ENCODE measurements at regions of chr16 and their contacts with region 1.

Region 1: DNA sequence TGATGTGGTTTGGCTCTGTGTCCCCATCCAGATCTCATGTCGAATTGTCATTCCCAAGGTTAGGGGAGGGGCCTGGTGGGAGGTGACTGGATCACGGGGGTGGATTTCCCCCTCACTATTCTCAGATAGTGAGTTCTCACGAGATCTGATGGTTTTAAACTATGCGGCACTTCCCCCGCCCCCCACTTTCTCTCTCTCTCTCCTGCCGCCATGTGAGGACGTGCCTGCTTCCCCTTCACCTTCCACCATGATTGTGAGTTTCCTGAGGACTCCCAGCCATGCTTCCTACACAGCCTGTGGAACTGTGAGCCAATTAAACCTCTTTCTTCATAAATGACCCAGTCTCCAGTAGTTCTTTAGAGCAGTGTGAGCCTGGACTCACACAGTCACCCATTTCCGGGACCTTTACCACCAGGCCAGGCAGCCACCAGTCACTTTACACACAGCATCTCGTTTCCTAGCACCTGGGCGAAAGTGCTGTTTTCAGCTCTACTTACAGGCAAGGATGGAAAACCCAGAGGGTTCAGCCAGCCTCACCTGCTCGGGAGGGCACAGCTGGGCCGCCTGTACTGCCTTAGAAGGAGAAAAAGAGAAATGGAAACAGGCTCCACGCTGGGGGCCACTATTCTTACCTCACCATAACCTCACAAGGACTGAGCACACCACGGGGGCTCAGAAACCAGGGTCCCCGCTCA is 13.8 kb upstream of the ZC3H18 start:
- DNase-seq: no peak
- H3K4me3 ChIP-seq: no peak overlapping the region
- H3K27ac ChIP-seq: no peak overlapping the region
- H3K4me1 ChIP-seq: no peaks in the 10 kb centered on the region
- H3K27me3 ChIP-seq: no peaks in the 10 kb centered on the region; a peak in 1 of 7 replicates
- CTCF ChIP-seq: no peak
- EP300 ChIP-seq: no peak
- POLR2A ChIP-seq: no peak
- RAD21 ChIP-seq: no peak

Region 2: GRCh38 chr16:88539652-88540345 is 16.6 kb before region 1 on chr16:
- CTCF ChIA-PET with region 1: interaction called, 36 read pairs
- POLR2A ChIA-PET with region 1: no interaction called
- DNase-seq: no peak
- H3K4me3 ChIP-seq: no peak overlapping the region
- H3K27ac ChIP-seq: no peak overlapping the region
- H3K4me1 ChIP-seq: peaks cover 0 to 14% (median 3%) of the 10 kb centered on the region in 4 experiments; a peak in 4 of 7 replicates
- H3K27me3 ChIP-seq: peaks cover 0 to 8% (median 0%) of the 10 kb centered on the region in 4 experiments; a peak in 3 of 7 replicates
- CTCF ChIP-seq: peak in 2 of 3 experiments; percentile 27 to 29; a peak in 2 of 4 replicates
- EP300 ChIP-seq: no peak
- POLR2A ChIP-seq: no peak
- RAD21 ChIP-seq: peak; percentile 30 to 32; a peak in 3 of 4 replicates